SK-N-SH (cell line): ENCODE measurements at regions of chr19 and their contacts with region 1.

Region 1: DNA sequence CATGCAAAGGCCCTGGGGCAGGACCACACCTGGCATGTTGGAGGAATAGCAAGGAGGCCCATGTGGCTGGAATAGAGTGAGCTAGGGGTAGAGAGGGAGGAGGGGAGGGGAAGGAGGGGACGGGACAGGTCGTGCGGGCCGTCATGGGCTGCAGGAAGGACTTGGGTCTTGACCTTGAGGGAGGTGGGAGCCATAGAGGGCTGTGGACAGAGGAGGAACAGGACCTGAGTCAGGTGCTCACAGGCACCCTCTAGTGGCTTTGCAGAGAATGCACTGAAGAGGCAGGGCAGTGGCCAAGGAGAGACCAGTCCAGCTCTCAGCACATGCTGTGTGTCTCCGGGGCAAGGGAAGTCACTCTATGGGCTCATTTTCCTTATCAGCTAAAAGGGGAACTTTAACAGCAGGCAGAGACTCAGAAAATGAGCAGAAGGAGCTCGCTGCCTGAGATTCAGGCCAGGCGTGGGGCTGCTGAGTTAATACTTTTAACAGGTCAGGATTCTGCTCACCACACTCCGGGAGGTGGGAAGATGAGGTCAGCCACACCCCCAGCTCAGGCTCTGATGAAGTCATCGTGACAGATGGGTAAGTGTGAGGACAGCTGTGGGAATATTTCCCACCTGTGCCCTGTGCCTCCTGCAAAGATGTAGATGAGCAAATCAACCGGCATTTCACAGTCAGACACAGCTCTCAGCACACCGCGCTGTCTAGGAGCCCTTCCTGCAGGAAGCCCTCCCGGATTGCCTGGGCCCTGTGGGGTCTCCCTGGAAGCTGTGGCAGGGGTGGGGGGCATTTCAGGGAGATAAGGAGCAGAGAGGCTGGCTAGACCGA is 6.0 kb upstream of the TNFAIP8L1 start:
- DNase-seq: peak; percentile 73
- H3K4me3 ChIP-seq: no peak overlapping the region; a peak in 1 of 4 replicates
- H3K27ac ChIP-seq: peak overlapping the region in 1 of 2 experiments; percentile 78; a peak in 1 of 4 replicates
- H3K4me1 ChIP-seq: peaks cover 0 to 8% of the 10 kb centered on the region in 2 experiments; a peak in 1 of 4 replicates
- H3K27me3 ChIP-seq: no peaks in the 10 kb centered on the region
- CTCF ChIP-seq: peak; percentile 77
- EP300 ChIP-seq: no peak
- RAD21 ChIP-seq: peak; percentile 48

Region 2: GRCh38 chr19:4557971-4558941 is 75.1 kb before region 1 on chr19:
- CTCF ChIA-PET with region 1: interaction called, 25 read pairs
- POLR2A ChIA-PET with region 1: no interaction called
- DNase-seq: peak; percentile 83
- H3K4me3 ChIP-seq: peak overlapping the region in 1 of 2 experiments; percentile 43; a peak in 1 of 4 replicates
- H3K27ac ChIP-seq: no peak overlapping the region
- H3K4me1 ChIP-seq: peaks cover 0 to 8% of the 10 kb centered on the region in 2 experiments; a peak in 1 of 4 replicates
- H3K27me3 ChIP-seq: no peaks in the 10 kb centered on the region
- CTCF ChIP-seq: peak; percentile 88
- EP300 ChIP-seq: no peak
- RAD21 ChIP-seq: peak; percentile 57

Region 3: GRCh38 chr19:4567584-4568071 is 65.7 kb before region 1 on chr19:
- CTCF ChIA-PET with region 1: interaction called, 200 read pairs
- POLR2A ChIA-PET with region 1: no interaction called
- DNase-seq: peak; percentile 88
- H3K4me3 ChIP-seq: peak overlapping the region in 1 of 2 experiments; percentile 27; a peak in 1 of 4 replicates
- H3K27ac ChIP-seq: no peak overlapping the region
- H3K4me1 ChIP-seq: no peaks in the 10 kb centered on the region; a peak in 1 of 4 replicates
- H3K27me3 ChIP-seq: no peaks in the 10 kb centered on the region
- CTCF ChIP-seq: peak; percentile 88
- EP300 ChIP-seq: no peak
- RAD21 ChIP-seq: peak; percentile 51

Region 4: GRCh38 chr19:4576016-4576933 is 57.1 kb before region 1 on chr19:
- CTCF ChIA-PET with region 1: interaction called, 200 read pairs
- POLR2A ChIA-PET with region 1: no interaction called
- DNase-seq: peak; percentile 85
- H3K4me3 ChIP-seq: peak overlapping the region in 1 of 2 experiments; percentile 39; a peak in 1 of 4 replicates
- H3K27ac ChIP-seq: peak overlapping the region in 1 of 2 experiments; percentile 49; a peak in 1 of 4 replicates
- H3K4me1 ChIP-seq: no peaks in the 10 kb centered on the region; a peak in 1 of 4 replicates
- H3K27me3 ChIP-seq: peaks cover 14% of the 10 kb centered on the region; the same call in 1 of the 2 replicates
- CTCF ChIP-seq: peak; percentile 84
- EP300 ChIP-seq: no peak
- RAD21 ChIP-seq: peak; percentile 64

Region 5: GRCh38 chr19:4583961-4584669 is 49.2 kb before region 1 on chr19:
- CTCF ChIA-PET with region 1: interaction called, 93 read pairs
- POLR2A ChIA-PET with region 1: no interaction called
- DNase-seq: peak; percentile 87
- H3K4me3 ChIP-seq: peak overlapping the region; percentile 50 to 60
- H3K27ac ChIP-seq: no peak overlapping the region
- H3K4me1 ChIP-seq: peaks cover 0 to 8% of the 10 kb centered on the region in 2 experiments; a peak in 1 of 4 replicates
- H3K27me3 ChIP-seq: peaks cover 22% of the 10 kb centered on the region; the same call in 1 of the 2 replicates
- CTCF ChIP-seq: no peak
- EP300 ChIP-seq: no peak
- RAD21 ChIP-seq: no peak

Region 6: DNA sequence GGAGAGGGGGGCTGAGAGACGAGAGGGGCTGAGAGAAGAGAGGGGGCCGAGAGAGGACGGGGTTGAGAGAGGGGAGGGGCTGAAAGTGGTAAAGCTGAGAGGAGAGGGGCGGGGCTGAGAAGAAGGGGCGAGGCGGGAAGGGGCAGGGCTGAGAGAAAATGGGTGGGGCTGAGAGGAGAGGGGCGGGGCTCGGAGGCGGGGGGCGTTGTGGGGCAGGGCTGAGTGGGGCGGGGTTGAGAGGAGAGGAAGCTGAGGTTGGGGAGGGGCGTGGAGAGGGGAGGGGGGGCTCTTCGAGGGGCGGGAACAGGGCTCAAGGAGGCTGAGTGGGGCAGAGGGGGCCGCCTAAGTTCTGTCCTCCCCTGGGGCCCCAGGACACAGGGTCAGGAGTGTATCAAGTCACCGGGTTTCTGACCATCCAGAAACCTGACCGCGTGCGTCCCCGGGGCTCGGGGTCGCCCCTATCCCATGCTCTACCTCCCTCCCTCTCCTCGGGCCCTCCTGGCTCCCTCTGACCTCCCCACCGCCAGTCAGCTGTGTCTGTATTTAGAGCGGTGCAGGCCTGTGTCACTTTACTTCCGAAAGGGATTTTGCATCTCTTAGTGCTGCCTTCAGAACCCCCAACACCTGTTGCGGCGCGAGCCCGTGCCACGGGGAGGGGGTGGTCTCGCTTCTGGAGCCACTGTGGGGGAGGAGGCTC is 35.2 kb before region 1 on chr19:
- CTCF ChIA-PET with region 1: interaction called, 93 read pairs
- POLR2A ChIA-PET with region 1: no interaction called
- DNase-seq: peak; percentile 86
- H3K4me3 ChIP-seq: peak overlapping the region; percentile 18 to 26; a peak in 2 of 4 replicates
- H3K27ac ChIP-seq: no peak overlapping the region
- H3K4me1 ChIP-seq: peaks cover 0 to 3% of the 10 kb centered on the region in 2 experiments; a peak in 1 of 4 replicates
- H3K27me3 ChIP-seq: peaks cover 25% of the 10 kb centered on the region; the same call in 1 of the 2 replicates
- CTCF ChIP-seq: no peak
- EP300 ChIP-seq: no peak
- RAD21 ChIP-seq: no peak

Region 7: DNA sequence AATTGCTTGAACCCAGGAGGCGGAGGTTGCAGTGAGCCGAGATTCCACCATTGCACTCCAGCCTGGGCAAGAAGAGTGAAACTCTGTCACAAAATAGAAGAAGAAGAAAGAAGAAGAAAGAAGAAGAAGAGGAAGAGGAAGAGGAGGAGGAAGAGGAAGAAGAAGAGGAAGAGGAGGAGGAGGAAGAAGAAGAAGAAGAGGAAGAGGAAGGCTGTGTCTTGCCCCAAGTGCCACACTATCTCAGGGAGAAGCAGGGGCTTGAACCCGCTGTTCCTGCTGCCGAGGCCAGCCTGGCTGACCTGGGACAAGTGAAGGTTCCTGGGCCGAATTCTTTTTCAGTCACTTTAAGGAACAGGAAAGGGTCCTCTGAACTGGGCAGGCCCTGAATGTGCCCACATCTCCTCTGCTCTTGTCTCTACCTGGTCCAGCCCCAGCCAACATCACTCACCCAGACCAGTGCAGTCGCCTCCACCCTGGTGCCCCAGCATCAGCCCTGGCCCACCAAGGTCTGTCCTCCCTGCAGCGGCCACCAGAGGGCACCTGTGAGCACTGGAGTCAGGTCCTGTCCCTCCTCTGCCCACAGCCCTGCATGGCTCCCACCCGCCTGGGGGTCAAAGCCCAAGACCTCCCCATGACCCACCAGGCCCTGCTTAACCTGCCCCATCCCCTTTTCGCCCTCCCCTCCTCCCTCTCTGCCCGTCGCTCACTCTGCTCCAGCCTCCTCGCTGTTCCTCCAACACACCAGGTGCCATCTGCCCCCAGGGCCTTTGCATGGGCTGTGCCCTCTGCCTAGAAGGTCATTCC is 178.2 kb after region 1 on chr19:
- CTCF ChIA-PET with region 1: no interaction called
- POLR2A ChIA-PET with region 1: no interaction called
- DNase-seq: peak; percentile 82
- H3K4me3 ChIP-seq: no peak overlapping the region; a peak in 1 of 4 replicates
- H3K27ac ChIP-seq: peak overlapping the region in 1 of 2 experiments; percentile 99; a peak in 2 of 4 replicates
- H3K4me1 ChIP-seq: peaks cover 3 to 7% of the 10 kb centered on the region in 2 experiments; a peak in 2 of 4 replicates
- H3K27me3 ChIP-seq: no peaks in the 10 kb centered on the region
- CTCF ChIP-seq: peak; percentile 80
- EP300 ChIP-seq: no peak
- RAD21 ChIP-seq: peak; percentile 53